HCT116 (cell line): ENCODE measurements at regions of chr13 and their contacts with region 1.

Region 1: GRCh38 chr13:65347420-65348030 is 1882.6 kb downstream of the PCDH9 start:
- DNase-seq: no peak
- ATAC-seq: no peak
- H3K4me3 ChIP-seq: no peak overlapping the region
- H3K27ac ChIP-seq: no peak overlapping the region
- H3K4me1 ChIP-seq: no peaks in the 10 kb centered on the region
- H3K27me3 ChIP-seq: no peaks in the 10 kb centered on the region
- CTCF ChIP-seq: no peak
- POLR2A ChIP-seq: no peak
- RAD21 ChIP-seq: no peak

Region 2: GRCh38 chr13:65292488-65292901 is 55.0 kb before region 1 on chr13:
- CTCF ChIA-PET with region 1: no interaction called
- POLR2A ChIA-PET with region 1: no interaction called
- RAD21 ChIA-PET with region 1: no interaction called
- intact Hi-C with region 1: loop called (anchors 5 kb)
- DNase-seq: no peak
- ATAC-seq: no peak
- H3K4me3 ChIP-seq: no peak overlapping the region
- H3K27ac ChIP-seq: no peak overlapping the region
- H3K4me1 ChIP-seq: no peaks in the 10 kb centered on the region
- H3K27me3 ChIP-seq: no peaks in the 10 kb centered on the region
- CTCF ChIP-seq: no peak
- POLR2A ChIP-seq: no peak
- RAD21 ChIP-seq: no peak

Region 3: GRCh38 chr13:65378943-65379519 is 31.5 kb after region 1 on chr13:
- CTCF ChIA-PET with region 1: no interaction called
- POLR2A ChIA-PET with region 1: no interaction called
- RAD21 ChIA-PET with region 1: no interaction called
- intact Hi-C with region 1: no loop called
- DNase-seq: peak; percentile 22
- ATAC-seq: no peak
- H3K4me3 ChIP-seq: no peak overlapping the region
- H3K27ac ChIP-seq: no peak overlapping the region
- H3K4me1 ChIP-seq: no peaks in the 10 kb centered on the region
- H3K27me3 ChIP-seq: no peaks in the 10 kb centered on the region
- CTCF ChIP-seq: no peak
- POLR2A ChIP-seq: no peak
- RAD21 ChIP-seq: no peak

Region 4: DNA sequence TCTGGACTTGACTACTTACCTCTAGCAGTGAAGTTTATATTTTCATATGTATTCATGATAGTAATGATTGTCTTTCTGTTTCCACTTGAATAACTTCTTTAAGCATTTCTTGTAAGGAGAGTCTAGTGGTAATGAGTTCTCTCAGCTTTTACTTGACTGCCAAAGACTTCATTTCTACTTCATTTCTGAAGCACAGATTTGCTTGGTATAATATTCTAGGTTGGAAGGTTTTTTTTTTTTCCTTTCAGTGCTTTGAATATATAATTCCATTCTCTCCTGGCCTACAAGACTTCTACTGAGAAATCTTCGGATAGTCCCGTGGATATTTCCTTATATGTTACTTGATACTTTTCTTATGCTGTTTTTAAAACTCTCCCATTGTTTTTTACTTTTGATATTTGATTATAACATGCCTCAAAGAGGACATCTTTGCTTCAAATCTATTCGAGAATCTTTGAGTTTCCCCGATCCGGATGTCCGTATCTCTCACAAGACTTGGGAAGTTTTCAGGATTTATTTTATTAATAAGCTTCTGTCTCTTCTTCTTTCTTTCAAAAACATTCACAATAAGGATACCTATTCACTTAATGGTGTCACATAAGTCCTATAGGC is 322.6 kb after region 1 on chr13:
- CTCF ChIA-PET with region 1: no interaction called
- POLR2A ChIA-PET with region 1: no interaction called
- RAD21 ChIA-PET with region 1: no interaction called
- intact Hi-C with region 1: no loop called
- DNase-seq: no peak
- ATAC-seq: no peak
- H3K4me3 ChIP-seq: no peak overlapping the region
- H3K27ac ChIP-seq: no peak overlapping the region
- H3K4me1 ChIP-seq: no peaks in the 10 kb centered on the region
- H3K27me3 ChIP-seq: no peaks in the 10 kb centered on the region
- CTCF ChIP-seq: no peak
- POLR2A ChIP-seq: no peak
- RAD21 ChIP-seq: no peak